A673 (cell line): ENCODE measurements at regions of chr14 and their contacts with region 1.

Region 1: DNA sequence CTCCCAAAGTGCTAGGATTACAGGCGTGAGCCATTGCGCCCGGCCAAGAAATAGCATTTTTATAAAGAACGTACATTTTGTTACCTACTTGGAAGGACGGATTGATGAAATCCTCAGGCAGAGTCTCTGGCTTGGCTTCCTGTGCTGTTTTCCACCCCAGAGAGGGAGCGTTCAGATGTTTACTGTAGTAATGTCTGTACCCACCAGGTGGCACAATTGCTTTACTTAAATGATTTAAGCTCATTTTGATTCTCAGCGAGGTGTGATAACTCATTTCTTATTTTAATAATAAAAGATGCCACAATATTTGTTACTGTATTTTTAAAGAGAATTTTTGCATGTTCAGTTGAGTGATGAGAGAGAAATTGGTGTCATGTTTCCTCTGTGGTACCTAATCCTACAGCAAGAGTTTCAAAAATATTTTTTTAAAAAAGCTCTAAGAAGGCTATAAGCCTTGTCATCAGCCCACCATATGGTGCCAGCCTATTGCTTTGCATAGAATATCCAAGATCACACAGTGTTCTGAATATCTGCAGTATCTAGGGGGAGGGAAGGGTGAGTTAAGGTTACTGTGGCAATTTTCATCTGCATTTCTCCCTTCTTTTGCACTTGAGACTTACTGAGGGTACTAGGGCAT is 82.6 kb upstream of the TRAF3 start:
- DNase-seq: peak; percentile 91
- H3K4me3 ChIP-seq: peak overlapping the region; percentile 25
- H3K27ac ChIP-seq: peak overlapping the region; percentile 82
- H3K4me1 ChIP-seq: peaks cover 71% of the 10 kb centered on the region
- H3K27me3 ChIP-seq: no peaks in the 10 kb centered on the region
- CTCF ChIP-seq: peak; percentile 77

Region 2: GRCh38 chr14:102437997-102438915 is 256.4 kb before region 1 on chr14:
- CTCF ChIA-PET with region 1: interaction called, 6 read pairs
- POLR2A ChIA-PET with region 1: no interaction called
- intact Hi-C with region 1: loop called (anchors 5 kb)
- DNase-seq: peak; percentile 95
- H3K4me3 ChIP-seq: peak overlapping the region; percentile 41
- H3K27ac ChIP-seq: peak overlapping the region; percentile 29
- H3K4me1 ChIP-seq: peaks cover 5% of the 10 kb centered on the region
- H3K27me3 ChIP-seq: no peaks in the 10 kb centered on the region
- CTCF ChIP-seq: peak; percentile 88

Region 3: DNA sequence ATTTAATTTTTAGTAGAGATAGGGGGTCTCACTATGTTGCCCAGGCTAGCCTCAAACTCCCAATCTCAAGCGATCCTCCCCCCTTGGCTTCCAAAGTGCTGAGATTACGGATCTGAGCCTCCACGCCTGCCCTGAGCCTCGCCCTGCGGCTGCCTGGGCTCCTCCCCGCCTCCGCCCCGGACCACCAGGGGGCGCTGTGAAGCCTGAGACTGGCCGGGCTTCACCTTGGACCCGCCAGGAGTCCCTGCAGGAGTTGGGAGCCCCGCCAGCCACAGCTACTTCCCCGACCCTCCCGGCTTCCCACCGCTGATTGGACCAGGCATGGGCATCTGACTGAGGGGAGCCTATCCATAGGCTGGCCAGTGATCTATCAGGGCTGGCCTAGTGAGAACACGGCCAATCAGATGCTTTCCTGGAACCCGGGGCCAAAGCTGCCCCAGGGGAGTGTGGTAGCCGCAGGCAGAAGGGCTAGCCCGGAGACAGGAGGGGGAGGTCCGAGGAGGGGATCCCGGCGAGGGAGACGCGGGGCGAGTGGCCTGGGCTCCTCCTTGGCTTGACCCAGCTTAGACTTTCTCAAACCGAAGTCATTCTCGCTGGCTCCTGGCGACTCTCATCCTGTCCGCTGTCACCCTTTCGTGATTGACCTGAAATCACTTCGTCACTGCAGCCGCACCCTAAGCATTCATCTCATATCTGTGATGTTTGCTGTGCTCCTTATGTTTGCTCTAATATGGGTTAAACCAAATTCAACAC is 170.0 kb before region 1 on chr14:
- CTCF ChIA-PET with region 1: interaction called, 11 read pairs
- POLR2A ChIA-PET with region 1: no interaction called
- intact Hi-C with region 1: loop called (anchors 2 kb)
- DNase-seq: peak; percentile 100
- H3K4me3 ChIP-seq: peak overlapping the region; percentile 53
- H3K27ac ChIP-seq: peak overlapping the region; percentile 91
- H3K4me1 ChIP-seq: peaks cover 34% of the 10 kb centered on the region
- H3K27me3 ChIP-seq: no peaks in the 10 kb centered on the region
- CTCF ChIP-seq: peak; percentile 99

Region 4: DNA sequence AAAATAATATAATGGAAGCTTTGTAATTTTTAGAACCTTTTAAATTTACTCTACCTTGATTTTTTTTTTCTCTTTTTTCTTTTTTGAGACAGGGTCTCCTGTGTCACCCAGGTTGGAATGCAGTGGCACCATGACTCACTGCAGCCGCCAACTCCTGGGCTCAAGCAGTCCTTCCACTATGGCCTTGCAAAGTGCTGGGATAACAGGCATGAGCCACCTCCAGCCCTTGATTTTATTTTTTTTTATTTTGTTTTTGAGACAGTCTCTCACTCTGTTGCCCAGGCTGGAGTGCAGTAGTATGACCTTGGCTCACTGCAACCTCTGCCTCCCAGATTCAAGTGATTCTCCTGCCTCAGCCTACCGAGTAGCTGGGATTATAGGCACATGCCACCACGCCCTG is 17.3 kb after region 1 on chr14:
- CTCF ChIA-PET with region 1: interaction called, 13 read pairs
- POLR2A ChIA-PET with region 1: interaction called, 3 read pairs
- intact Hi-C with region 1: no loop called
- DNase-seq: no peak
- H3K4me3 ChIP-seq: no peak overlapping the region
- H3K27ac ChIP-seq: peak overlapping the region; percentile 1
- H3K4me1 ChIP-seq: no peaks in the 10 kb centered on the region
- H3K27me3 ChIP-seq: no peaks in the 10 kb centered on the region
- CTCF ChIP-seq: no peak

Region 5: DNA sequence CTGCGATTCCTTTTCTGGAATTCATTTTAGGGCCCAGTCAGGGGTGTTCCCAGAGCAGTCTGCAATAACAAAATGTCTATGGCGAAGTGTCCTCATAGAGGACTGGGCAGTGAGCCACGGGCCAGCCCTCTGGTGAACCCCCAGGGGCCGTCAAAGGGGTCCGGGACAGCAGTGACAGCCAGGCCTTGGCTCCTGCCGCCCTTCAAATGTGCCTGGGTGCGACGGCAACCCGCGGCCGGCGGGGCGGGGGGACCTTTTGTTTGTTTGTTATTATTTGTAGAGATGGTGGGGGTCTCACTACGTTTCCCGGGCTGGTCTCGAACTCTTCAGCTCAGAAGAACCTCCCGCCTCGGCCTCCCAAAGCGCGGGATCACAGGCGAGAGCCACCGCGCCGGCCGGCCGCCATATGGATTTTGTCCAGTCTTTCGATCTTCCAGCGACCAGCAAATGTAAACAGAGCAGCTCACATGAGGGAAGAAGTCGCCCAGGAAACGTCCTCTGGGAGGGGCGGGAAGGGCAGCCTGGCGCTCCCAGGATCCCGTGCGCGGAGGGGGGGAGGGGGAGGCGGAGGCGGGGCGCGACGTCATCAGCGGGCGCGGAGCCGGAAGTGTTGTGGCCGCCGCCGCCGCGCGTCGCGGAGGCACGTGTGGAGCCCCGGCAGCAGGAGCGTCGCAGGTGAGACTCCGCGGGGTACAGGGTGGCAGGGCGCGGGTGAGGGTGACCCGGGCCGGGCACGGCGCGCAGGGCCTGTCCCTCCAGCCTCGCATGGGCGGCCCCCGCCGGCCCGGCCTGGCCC is 834.1 kb after region 1 on chr14 and contains the start of gene TRMT61A:
- CTCF ChIA-PET with region 1: no interaction called
- POLR2A ChIA-PET with region 1: interaction called, 13 read pairs
- intact Hi-C with region 1: no loop called
- DNase-seq: peak; percentile 91
- H3K4me3 ChIP-seq: peak within 1 kb of the TSS; percentile 99
- H3K27ac ChIP-seq: peak within 1 kb of the TSS; percentile 82
- H3K4me1 ChIP-seq: peaks cover 18% of the 10 kb centered on the region
- H3K27me3 ChIP-seq: no peaks in the 10 kb centered on the region
- CTCF ChIP-seq: no peak
- total RNA-seq, gene TRMT61A: 19.3 and 23.6 TPM in 2 replicates